Ascending aorta (tissue), 2 donors: ENCODE measurements at regions of chr2 and their contacts with region 1.

Region 1: DNA sequence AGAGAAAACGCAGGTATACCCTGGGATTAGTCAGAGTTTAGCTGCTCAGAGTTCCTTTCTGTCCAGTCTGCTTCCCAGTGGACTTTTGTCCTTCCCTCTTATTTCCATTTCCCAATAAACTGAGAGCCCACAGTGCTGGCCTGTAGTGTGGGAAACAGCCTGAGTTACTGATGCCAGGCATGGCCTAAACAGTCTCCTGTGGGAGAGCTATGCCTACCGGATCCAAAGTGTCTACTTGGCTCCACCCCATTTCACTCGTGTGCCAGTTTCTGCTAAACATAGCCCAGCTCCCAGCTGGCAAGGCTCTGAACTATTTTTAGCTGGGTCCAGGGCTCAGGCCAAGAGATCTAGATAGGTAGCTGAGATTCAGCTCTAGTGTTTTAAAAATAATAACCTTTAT is 15.6 kb upstream of the PPP1CB start:
- DNase-seq: peak; percentile 72 to 95
- H3K4me3 ChIP-seq: peak overlapping the region; percentile 52 to 62
- H3K27ac ChIP-seq: peak overlapping the region; percentile 86 to 89
- H3K4me1 ChIP-seq: peaks cover 4 to 20% of the 10 kb centered on the region in 2 donors
- H3K27me3 ChIP-seq: no peaks in the 10 kb centered on the region
- CTCF ChIP-seq: no peak

Region 2: DNA sequence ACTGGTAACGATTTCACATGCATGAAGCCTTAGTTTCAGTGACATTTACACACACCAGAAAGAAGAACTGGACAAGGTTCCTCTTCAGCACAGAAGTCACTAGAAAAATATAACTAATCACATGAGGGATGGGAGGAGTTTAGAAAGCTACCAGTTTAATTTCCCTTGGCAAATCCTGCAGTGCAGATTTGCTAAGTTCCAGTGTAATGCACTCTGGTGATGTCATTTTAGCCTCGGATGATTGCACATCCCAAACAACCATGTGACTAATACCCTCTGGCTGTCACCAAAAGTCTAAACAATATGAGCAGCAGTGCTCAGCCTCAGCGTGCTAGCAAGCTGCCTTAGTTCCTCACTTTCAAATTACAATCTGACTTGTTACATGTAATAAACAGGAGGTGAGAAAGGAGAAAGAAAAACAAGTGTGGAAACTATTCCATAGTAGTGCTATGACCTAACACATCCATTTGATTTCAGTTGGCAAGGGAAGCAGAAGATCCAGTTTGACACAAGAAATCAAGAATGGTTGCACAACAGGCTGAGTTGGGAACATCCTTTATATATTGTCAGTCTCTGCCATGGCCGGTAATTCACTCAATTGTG is 19.7 kb before region 1 on chr2:
- intact Hi-C with region 1: loop called (anchors 2 kb)
- DNase-seq: peak; percentile 24 to 89
- H3K4me3 ChIP-seq: no peak overlapping the region
- H3K27ac ChIP-seq: peak overlapping the region; percentile 80 to 84
- H3K4me1 ChIP-seq: peaks cover 5 to 13% of the 10 kb centered on the region in 2 donors
- H3K27me3 ChIP-seq: no peaks in the 10 kb centered on the region
- CTCF ChIP-seq: no peak

Region 3: GRCh38 chr2:28821295-28821958 is 85.4 kb after region 1 on chr2:
- intact Hi-C with region 1: no loop called
- DNase-seq: no peak
- H3K4me3 ChIP-seq: no peak overlapping the region
- H3K27ac ChIP-seq: no peak overlapping the region
- H3K4me1 ChIP-seq: no peaks in the 10 kb centered on the region
- H3K27me3 ChIP-seq: no peaks in the 10 kb centered on the region
- CTCF ChIP-seq: peak; percentile 57 to 78 (median 66)